Esophagus muscularis mucosa (tissue), 4 donors: ENCODE measurements at regions of chr10 and their contacts with region 1.

Region 1: DNA sequence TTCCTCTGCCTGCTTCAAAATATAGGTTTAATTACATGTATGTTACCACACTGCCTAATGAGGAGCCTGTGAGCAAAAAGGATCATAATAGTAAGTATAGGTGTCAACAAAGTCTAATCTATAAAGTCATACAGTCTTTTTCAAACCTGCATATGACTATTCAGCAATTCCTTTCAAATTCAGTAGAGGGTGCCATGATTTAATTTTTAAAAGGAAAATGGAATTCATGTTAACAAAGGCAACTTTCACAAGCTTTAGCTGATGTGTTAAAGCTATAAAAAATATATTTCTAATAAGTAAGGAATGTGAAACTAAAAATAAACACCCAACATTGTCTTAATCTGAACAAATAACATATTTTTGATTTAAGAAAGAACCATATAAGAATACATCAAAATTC is 52.1 kb downstream of the MPP7 start:
- DNase-seq: no peak
- H3K4me3 ChIP-seq: no peak overlapping the region
- H3K27ac ChIP-seq: peak overlapping the region; percentile 38 to 73 (median 59)
- H3K4me1 ChIP-seq: peaks cover 9 to 66% (median 58%) of the 10 kb centered on the region in 4 donors
- H3K27me3 ChIP-seq: no peaks in the 10 kb centered on the region
- CTCF ChIP-seq: peak; percentile 66 to 77 (median 68)
- EP300 ChIP-seq: no peak
- POLR2A ChIP-seq: no peak

Region 2: DNA sequence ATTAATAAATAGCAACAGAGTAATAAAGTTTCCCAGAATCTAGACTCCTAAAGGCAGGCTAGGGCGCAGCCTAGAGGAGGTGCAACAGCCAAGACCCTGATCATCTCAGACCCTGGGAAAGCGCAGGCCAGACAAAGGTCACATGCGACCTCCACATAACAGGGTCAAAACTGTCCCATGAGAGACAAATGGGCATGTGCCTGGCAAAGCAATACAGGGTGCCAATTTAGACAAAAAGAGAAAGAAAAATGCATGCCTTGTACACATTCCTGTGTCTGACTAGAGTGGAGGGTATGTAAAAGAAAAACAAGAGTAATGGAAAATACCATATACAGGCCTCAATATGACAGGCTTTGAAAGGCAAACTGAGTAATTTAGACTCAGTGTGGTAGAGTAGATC is 29.9 kb after region 1 on chr10:
- intact Hi-C with region 1: no loop called
- DNase-seq: peak; percentile 55
- H3K4me3 ChIP-seq: no peak overlapping the region
- H3K27ac ChIP-seq: peak overlapping the region; percentile 46 to 80 (median 58)
- H3K4me1 ChIP-seq: peaks cover 18 to 72% (median 57%) of the 10 kb centered on the region in 4 donors
- H3K27me3 ChIP-seq: no peaks in the 10 kb centered on the region
- CTCF ChIP-seq: no peak
- EP300 ChIP-seq: no peak
- POLR2A ChIP-seq: no peak

Region 3: DNA sequence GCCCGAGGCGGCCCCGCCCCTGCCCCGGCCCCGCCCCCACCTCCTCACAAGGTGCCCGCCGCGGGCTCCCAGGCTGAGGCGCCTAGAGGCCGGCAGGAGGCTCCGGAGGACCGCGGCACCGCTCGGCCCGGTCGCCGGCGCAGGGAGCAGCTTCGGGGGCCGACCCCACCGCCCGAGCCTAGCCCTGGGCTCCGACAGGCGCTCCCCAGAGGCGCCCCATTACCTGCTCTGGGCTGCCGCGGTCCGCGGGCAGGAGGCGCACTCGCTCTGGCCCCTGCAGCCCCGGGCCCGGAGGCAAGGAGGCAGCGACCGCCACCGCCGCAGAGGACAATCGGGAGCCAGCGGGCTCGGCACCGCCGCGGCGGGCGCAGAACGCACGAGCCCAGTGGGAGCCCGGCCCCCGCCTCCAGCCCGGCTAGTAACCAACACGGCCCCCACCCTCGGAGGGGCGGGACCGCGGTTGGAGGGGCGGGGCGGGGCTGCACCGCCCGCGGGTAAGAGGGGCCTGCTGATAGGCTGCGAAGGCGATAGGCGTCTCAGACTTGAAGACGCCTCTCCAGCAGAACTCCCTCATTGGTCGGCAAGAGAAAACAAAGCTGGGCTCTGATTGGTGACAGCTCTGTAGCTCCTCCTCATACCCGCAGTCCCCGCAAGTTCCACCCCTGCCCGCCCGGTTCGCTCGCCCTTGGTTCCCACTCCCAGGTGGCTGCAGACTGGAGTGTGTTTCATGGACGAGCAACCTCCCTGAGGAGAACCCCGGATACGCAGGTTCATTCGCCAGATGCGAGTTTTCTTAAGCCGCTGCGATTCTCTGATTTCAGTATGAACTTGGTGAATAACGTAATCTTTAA is 52.1 kb after region 1 on chr10 and contains the start of gene MPP7:
- intact Hi-C with region 1: loop called (anchors 2 kb)
- DNase-seq: peak; percentile 99
- H3K4me3 ChIP-seq: peak within 1 kb of the TSS; percentile 69 to 96 (median 76)
- H3K27ac ChIP-seq: peak within 1 kb of the TSS; percentile 90 to 95 (median 90)
- H3K4me1 ChIP-seq: peaks cover 17 to 47% (median 42%) of the 10 kb centered on the region in 4 donors
- H3K27me3 ChIP-seq: no peaks in the 10 kb centered on the region
- CTCF ChIP-seq: peak; percentile 50 to 74 (median 65)
- EP300 ChIP-seq: no peak
- POLR2A ChIP-seq: no peak
- total RNA-seq, gene MPP7: 30.3 to 59.1 (median 49.3) TPM

Region 4: DNA sequence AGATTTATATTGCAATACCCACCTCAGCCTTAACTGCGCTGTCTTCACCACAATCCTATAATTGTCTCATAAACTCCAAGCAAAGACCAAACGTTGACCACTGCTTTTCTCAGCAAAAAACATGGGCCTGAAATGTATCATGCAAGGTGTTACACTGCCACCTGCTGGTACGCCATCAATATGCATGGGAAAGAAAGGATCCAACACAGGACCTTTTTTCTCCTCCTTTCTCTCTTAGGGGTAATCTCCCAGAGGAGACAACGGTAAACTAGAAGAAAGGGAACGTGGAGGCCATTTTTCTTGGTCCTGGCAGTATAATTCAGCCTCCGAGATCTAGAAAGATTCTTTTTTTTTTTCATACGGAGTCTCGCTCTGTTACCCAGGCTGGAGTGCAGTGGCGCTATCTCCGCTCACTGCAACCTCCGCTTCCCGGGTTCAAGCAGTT is 131.1 kb after region 1 on chr10:
- intact Hi-C with region 1: loop called (anchors 2 kb)
- DNase-seq: peak; percentile 96
- H3K4me3 ChIP-seq: no peak overlapping the region
- H3K27ac ChIP-seq: peak overlapping the region in 1 of 4 donors; percentile 31
- H3K4me1 ChIP-seq: peaks cover 0 to 10% (median 6%) of the 10 kb centered on the region in 4 donors
- H3K27me3 ChIP-seq: no peaks in the 10 kb centered on the region
- CTCF ChIP-seq: peak; percentile 93 to 98 (median 97)
- EP300 ChIP-seq: no peak
- POLR2A ChIP-seq: no peak